Right ventricle myocardium inferior (tissue), 1 donor: ENCODE measurements at regions of chr6 and their contacts with region 1.

Region 1: GRCh38 chr6:30556066-30556905 is at the start of gene GNL1:
- DNase-seq: peak; percentile 96
- ATAC-seq: peak; percentile 79
- total RNA-seq, gene GNL1: 18.3 TPM

Region 2: GRCh38 chr6:30378290-30378937 is 177.9 kb before region 1 on chr6:
- intact Hi-C with region 1: no loop called
- DNase-seq: no peak
- ATAC-seq: no peak

Region 3: GRCh38 chr6:30571075-30571768 is 14.9 kb after region 1 on chr6 and contains the start of gene ABCF1:
- intact Hi-C with region 1: loop called (anchors 2 kb)
- DNase-seq: peak; percentile 100
- ATAC-seq: peak; percentile 99
- total RNA-seq, gene ABCF1: 39.5 TPM

Region 4: DNA sequence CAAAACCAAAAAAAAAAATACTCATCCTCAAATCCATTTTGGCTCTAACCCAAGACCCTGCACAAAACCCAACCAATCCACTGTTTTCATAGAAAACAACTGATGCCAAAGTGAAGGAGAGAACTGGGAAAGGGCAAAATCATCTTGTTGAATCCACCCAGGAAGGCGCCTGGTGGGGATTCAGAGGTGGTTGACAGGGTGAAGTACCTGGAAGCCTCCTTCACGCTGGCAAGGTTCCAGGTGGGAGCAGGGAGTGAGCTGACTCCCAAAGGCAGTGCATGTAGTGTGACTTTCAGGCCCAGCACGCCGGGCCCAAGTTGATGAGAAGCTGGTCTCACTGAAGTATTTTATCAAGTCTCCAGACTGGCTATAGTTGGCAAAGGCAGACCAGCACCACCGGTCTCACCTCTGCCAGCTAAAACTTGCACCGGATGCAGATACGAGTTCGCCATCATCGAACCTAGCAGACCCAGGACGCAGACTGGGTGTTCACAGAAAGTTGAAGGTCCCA is 44.2 kb after region 1 on chr6:
- intact Hi-C with region 1: no loop called
- DNase-seq: no peak
- ATAC-seq: no peak